A549 (cell line): ENCODE measurements at regions of chr2 and their contacts with region 1.

Region 1: DNA sequence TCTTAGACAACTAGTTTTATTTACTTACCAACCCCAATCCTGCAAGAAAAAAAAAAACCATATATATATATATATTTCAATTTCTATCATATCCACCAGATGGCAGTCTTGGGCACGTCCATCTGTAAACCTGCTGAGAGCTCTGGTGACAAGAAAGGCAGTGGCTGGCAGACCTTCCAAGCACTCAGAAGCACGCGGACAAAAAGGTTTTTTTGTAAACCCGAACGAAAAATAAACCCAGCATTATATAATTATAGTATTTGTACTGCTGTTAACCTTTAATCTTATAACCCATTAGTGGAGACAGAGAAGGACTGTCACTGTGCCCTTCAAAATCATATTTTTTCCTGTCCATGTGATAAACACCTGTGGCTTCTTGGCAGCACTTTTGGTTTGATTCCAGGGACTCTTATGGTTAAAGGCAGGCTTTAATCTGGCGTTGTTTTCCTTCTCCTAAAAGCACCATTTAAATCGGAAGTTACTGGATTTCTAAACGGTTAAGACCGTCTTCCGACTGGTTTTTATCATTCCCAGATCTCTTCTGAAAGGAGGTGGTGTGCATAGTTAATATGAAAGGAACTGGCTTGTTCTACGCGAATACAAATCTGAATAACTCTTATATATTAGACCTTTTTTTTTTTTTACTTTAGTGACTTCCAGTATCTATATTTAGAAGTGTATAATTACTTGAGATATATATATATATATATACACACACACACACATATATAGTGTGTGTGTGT is 31.0 kb upstream of the SLC3A1 start:
- DNase-seq: peak; percentile 71 to 84
- ATAC-seq: peak; percentile 66 to 74; a peak in 4 of 6 replicates
- H3K4me3 ChIP-seq: peak overlapping the region; percentile 35
- H3K27ac ChIP-seq: peak overlapping the region; percentile 73 to 78
- H3K4me1 ChIP-seq: peaks cover 60% of the 10 kb centered on the region
- CTCF ChIP-seq: peak; percentile 94
- EP300 ChIP-seq: no peak
- POLR2A ChIP-seq: no peak
- RAD21 ChIP-seq: peak; percentile 81 to 94

Region 2: GRCh38 chr2:44184106-44184505 is 60.2 kb before region 1 on chr2:
- CTCF ChIA-PET with region 1: no interaction called
- POLR2A ChIA-PET with region 1: no interaction called
- DNase-seq: no peak
- ATAC-seq: no peak
- H3K4me3 ChIP-seq: no peak overlapping the region
- H3K27ac ChIP-seq: no peak overlapping the region
- H3K4me1 ChIP-seq: peaks cover 19% of the 10 kb centered on the region; the same call in 2 of the 3 replicates
- CTCF ChIP-seq: no peak
- EP300 ChIP-seq: no peak
- POLR2A ChIP-seq: no peak
- RAD21 ChIP-seq: no peak

Region 3: GRCh38 chr2:44233450-44234128 is 10.7 kb before region 1 on chr2:
- CTCF ChIA-PET with region 1: interaction called, 15 read pairs
- POLR2A ChIA-PET with region 1: no interaction called
- DNase-seq: peak; percentile 81 to 83
- ATAC-seq: peak; percentile 78 to 79
- H3K4me3 ChIP-seq: peak overlapping the region; percentile 26
- H3K27ac ChIP-seq: peak overlapping the region; percentile 77 to 90
- H3K4me1 ChIP-seq: peaks cover 79% of the 10 kb centered on the region
- CTCF ChIP-seq: no peak
- EP300 ChIP-seq: no peak
- POLR2A ChIP-seq: no peak
- RAD21 ChIP-seq: no peak

Region 4: DNA sequence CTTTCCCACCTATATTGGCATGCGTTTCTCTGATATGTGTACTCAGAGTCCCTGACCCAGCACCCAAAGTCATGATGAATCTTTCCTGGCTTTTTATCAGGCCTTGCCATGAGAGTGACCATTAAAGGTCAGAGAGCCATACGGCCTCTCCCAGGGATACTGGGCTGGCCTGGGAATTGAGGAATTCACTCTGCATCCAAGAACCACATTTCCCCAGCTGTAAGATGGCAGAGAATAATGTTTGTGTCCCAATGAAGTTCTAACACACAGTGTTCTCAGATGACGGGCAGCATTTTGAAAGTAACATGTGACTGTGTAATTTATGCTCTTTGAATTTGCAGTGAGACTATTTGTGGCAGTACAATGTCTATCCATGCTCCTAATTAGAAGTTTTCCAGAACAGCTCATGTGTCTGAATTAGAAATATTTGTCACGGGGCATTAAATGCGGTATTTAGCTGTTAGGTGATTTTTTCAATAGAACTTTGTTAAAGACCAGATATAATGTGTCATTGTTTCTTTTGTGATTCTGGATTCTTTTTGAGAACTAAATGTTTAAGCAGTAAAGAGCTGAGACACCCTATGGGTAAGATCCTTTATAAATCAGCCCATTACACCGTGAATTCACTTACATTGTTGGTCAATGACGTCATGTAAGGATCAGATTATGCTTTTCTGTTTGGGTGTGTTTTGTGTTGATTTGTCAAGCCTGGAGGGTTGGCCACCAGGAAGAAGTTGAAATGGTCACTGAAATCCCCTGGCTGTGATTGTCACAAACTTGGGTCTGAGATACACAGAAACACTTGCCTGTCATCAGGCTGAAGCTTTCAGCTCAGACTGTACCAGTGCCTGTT is 23.7 kb after region 1 on chr2:
- CTCF ChIA-PET with region 1: interaction called, 21 read pairs
- POLR2A ChIA-PET with region 1: no interaction called
- DNase-seq: peak in 1 of 2 experiments; percentile 68
- ATAC-seq: peak; percentile 55 to 66; a peak in 5 of 6 replicates
- H3K4me3 ChIP-seq: no peak overlapping the region
- H3K27ac ChIP-seq: peak overlapping the region; percentile 31 to 64; a peak in 5 of 6 replicates
- H3K4me1 ChIP-seq: peaks cover 25% of the 10 kb centered on the region
- CTCF ChIP-seq: no peak
- EP300 ChIP-seq: no peak
- POLR2A ChIP-seq: no peak
- RAD21 ChIP-seq: no peak

Region 5: DNA sequence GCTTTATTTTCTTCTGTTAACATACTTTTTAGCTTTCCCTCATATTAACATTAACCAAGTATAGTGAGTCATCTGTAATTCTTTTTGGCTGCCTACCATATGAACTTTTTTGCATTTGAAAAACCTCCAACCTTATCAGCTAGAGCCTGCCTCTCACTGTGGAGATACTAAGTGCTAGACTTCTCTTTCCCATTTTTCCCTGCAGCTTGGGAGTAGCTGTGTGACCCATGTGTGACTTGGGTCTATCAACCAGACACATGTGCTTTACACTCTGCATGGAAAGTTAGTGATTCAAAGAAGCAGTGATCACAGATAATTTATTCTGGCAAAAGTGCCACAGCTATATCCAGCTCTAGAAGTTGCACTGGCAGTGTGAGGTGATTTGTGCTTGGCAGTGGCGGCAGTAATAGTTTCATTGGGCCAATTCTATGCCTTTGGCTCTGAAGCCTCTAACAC is 80.7 kb after region 1 on chr2:
- CTCF ChIA-PET with region 1: no interaction called
- POLR2A ChIA-PET with region 1: no interaction called
- DNase-seq: no peak
- ATAC-seq: peak in 1 of 2 experiments; percentile 39; a peak in 1 of 6 replicates
- H3K4me3 ChIP-seq: no peak overlapping the region
- H3K27ac ChIP-seq: no peak overlapping the region
- H3K4me1 ChIP-seq: peaks cover 12% of the 10 kb centered on the region
- CTCF ChIP-seq: no peak
- EP300 ChIP-seq: no peak
- POLR2A ChIP-seq: no peak
- RAD21 ChIP-seq: no peak